ENCODE measurements at regions of chr1 and their contacts with region 1.

Region 1: DNA sequence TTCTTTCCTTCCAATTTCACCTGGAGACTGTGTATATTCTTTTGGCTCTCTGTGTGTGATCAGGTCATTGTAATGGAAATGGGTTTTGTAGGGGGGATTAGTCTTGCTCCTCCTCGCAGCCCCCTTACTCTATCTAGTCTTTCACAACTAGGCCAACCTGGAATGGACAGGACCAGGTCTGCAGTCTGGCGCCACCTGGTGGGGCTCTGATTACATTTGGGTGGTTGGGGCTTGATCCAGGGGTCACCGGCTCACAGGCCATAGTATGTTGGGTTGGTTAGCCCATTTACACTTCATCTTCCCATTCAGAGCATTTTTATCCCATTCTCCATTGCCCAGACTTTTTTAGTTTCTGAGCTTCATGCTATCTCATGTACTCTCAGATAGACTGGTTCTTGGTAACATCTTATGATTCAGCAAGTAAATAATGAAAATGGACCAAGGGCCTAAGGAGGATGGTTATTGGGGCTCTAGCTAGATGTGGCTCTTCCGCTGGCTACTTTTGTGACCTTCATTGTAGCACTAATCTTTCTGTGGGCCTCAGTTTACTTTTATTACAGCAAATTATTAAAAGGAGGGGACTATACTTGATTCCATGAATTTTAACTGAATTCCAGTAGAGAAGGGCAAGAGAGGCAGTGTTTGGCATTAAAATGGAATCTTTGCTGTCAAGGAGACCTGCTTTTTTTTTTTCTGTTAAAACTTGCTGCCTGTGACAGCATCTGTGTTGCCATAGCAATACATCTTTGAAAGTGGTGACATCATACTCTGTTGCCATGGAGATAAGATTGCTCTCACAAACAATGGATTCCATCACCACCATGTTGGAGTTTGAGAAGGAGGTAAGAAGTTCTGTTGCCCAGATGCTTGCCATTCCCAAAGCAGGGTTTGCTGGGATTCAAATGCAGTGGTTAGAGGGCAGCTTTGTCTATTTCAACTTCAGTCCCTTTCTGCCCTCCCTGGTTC is 150.1 kb downstream of the PLXNA2 start:
- DNase-seq: peak; percentile 82
- H3K4me3 Mint-ChIP-seq: no peak overlapping the region
- H3K27ac Mint-ChIP-seq: no peak overlapping the region
- H3K4me1 Mint-ChIP-seq: no peaks in the 10 kb centered on the region
- H3K27me3 Mint-ChIP-seq: no peaks in the 10 kb centered on the region

Region 2: GRCh38 chr1:208029381-208030287 is 64.4 kb before region 1 on chr1:
- CTCF ChIA-PET with region 1: interaction called, 165 read pairs
- intact Hi-C with region 1: no loop called
- DNase-seq: no peak
- H3K4me3 Mint-ChIP-seq: no peak overlapping the region
- H3K27ac Mint-ChIP-seq: no peak overlapping the region
- H3K4me1 Mint-ChIP-seq: no peaks in the 10 kb centered on the region
- H3K27me3 Mint-ChIP-seq: no peaks in the 10 kb centered on the region

Region 3: DNA sequence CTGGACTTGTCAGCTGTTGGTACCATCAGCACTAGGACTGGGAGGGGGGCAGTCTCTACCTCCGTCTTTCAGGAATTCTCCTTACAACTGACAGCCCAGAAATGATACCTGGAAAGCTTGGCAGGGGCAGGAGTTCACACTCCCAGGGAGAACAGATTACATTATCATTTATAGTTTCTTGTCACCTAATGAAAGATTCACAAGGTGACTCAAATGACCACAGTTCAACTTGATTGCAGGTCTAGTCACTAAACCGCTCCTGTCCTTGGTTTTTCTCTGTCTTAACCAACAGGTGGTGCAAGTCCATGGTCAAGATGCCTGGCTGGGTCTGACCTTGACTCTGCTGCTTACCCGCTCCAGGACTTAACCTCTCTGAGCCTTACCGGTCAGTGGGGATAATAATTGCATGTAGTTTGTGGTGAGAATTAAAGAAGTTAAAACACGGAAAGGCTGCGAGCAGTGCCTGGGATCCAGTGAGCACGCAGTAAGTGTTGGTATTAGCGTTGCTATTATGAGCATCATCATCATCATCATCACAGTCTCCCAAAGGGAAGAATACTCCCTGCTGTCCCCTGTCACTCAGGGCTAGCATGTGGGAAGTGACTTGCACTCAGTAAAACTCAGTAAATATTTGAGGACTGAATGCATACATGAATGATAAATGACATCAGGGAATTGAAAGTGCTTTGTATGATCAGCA is 57.8 kb before region 1 on chr1:
- CTCF ChIA-PET with region 1: interaction called, 8 read pairs
- intact Hi-C with region 1: loop called (anchors 1 kb)
- DNase-seq: no peak
- H3K4me3 Mint-ChIP-seq: no peak overlapping the region
- H3K27ac Mint-ChIP-seq: no peak overlapping the region
- H3K4me1 Mint-ChIP-seq: no peaks in the 10 kb centered on the region
- H3K27me3 Mint-ChIP-seq: no peaks in the 10 kb centered on the region

Region 4: GRCh38 chr1:208071435-208072031 is 22.5 kb before region 1 on chr1:
- CTCF ChIA-PET with region 1: interaction called, 13 read pairs
- intact Hi-C with region 1: no loop called
- DNase-seq: no peak
- H3K4me3 Mint-ChIP-seq: no peak overlapping the region
- H3K27ac Mint-ChIP-seq: no peak overlapping the region
- H3K4me1 Mint-ChIP-seq: no peaks in the 10 kb centered on the region
- H3K27me3 Mint-ChIP-seq: no peaks in the 10 kb centered on the region

Region 5: GRCh38 chr1:208245185-208245705 is 151.2 kb after region 1 on chr1:
- CTCF ChIA-PET with region 1: interaction called, 8 read pairs
- intact Hi-C with region 1: loop called (anchors 1 kb)
- DNase-seq: peak; percentile 92
- H3K4me3 Mint-ChIP-seq: peak overlapping the region; percentile 70
- H3K27ac Mint-ChIP-seq: no peak overlapping the region
- H3K4me1 Mint-ChIP-seq: peaks cover 10% of the 10 kb centered on the region
- H3K27me3 Mint-ChIP-seq: peaks cover 25% of the 10 kb centered on the region

Region 6: DNA sequence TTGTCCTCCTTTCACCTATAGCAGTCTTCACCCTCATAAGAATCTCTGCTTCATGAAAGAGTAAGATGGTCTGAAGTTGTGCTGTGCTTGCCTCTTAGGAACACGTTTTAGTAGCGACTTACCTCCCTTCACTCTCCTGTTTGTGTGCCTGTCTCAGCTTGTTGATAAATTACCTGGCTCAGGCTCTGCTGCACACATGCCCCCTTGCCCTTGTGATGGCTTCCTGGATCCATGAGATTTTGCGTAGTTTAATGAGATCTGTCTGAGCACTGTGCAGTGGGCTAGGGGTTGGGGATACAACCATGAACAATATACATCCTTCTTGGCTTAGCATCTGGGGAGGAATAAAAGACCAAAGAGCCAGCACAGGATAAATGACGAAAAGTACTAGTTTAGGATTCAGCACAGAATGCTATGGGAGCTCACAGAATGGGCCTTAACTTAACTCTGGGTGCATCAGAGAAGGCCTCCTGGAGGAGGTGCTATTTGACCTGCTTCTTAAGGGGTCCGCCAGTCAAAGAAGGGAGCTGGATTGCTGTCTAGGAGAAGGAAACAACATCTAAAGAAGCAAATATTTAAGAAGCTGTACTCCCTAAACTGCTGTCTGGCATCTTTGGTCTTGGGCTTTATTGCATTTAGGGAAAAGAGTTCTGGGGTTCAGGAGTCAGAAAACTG is 325.8 kb after region 1 on chr1:
- CTCF ChIA-PET with region 1: no interaction called
- intact Hi-C with region 1: no loop called
- DNase-seq: no peak
- H3K4me3 Mint-ChIP-seq: no peak overlapping the region
- H3K27ac Mint-ChIP-seq: no peak overlapping the region
- H3K4me1 Mint-ChIP-seq: no peaks in the 10 kb centered on the region
- H3K27me3 Mint-ChIP-seq: peaks cover 7% of the 10 kb centered on the region

Region 7: DNA sequence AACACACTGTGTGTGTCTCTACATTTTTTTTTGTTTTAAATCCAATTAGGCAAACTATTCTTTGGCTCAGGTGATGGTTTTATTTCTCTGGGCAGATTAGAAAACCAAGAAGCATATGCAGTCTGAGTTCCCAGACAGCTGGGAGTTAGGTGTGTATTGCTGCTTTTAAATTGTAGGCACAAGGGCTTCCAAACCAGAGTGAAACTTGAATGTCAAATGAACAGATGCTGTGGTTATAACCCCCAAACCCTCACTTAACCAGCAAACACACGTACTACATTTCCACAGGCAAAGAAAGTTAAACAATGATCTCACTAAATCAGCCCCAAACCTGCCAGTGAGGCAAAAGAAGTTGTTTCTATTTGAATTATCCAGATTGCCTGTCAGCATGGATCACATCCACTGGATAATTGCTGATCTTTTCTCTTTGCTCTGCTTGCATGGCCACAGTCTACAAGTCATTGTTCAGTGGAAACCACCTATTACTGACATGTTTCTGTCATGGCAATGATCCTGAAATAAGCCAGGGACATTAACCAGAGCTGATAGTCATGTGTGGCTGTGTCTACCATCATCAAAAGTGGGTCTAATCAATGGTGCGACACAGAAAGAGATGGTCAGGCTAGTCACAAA is 726.7 kb after region 1 on chr1:
- CTCF ChIA-PET with region 1: no interaction called
- intact Hi-C with region 1: no loop called
- DNase-seq: no peak
- H3K4me3 Mint-ChIP-seq: no peak overlapping the region
- H3K27ac Mint-ChIP-seq: no peak overlapping the region
- H3K4me1 Mint-ChIP-seq: no peaks in the 10 kb centered on the region
- H3K27me3 Mint-ChIP-seq: peaks cover 4% of the 10 kb centered on the region